Right ventricle myocardium inferior (tissue), 1 donor: ENCODE measurements at regions of chr2 and their contacts with region 1.

Region 1: DNA sequence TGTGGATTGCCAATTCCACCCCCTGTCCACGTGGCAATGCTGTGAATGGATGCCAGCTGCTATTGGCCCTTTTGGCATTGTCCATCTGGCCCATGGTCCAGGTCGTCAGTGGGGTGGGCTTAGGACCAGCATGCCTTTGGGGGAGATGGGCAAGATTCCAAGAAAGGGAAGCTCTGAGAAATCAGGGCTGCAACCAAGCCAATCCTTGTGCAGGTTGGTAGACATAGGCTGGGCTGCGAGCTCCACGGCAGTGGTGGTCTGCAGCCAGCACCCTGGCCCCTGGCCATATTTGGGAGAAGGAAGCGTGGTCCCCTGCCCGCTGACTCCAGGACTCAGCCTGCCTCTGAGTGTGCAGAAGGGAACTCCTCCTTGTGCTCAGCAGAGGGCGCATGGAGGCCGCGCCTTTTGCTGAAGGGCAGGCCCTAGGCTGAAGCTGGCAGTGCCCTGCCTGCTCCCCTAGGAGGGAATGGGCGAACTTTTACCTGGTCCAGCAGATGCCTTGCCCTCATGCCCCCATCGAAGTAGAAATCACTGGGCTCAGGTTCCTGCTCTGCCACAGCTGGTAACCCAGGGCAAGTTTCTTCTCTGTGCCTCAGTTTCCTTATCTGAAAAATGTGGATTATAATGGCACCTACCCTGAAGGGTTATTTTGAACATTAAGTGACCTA is 5.4 kb downstream of the SPR start:
- DNase-seq: peak; percentile 82
- ATAC-seq: peak; percentile 77

Region 2: GRCh38 chr2:72689579-72690195 is 203.0 kb before region 1 on chr2:
- intact Hi-C with region 1: no loop called
- DNase-seq: no peak
- ATAC-seq: peak; percentile 28

Region 3: DNA sequence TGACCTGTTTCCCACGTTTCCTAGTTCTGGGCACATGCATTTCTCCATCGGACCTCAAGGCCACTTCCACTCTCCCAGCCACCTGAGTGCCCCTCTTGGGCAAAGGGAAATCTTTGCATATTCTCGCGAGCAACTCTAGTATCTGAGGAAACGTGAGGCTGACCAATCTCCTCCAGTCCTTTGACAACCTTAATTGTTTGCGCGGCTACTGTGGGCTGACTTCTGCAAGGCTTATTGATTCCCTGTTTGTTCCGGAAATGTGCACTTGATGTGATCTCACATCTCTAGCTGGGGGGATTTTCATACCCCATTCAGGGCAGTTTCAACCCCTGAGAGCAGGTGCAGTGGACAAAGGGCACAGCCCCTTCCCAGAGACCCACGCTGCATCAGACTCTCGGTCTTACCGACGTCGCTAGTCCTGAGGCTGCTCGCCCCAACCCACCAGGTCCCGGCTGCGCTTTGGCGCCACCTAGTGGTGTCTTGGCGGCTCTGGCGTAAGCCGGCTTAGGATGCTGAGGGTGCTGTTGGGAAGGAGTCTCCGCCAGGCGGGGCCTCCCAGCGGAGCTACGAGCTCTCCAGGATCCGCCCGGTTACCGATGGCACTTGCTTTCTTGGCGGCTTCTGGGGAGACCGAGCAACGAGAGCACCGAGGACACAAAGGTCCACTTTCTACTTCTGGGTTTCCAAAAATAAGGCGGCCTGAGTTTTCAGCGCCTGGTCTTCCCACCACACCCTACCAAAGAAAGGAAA is 30.2 kb before region 1 on chr2:
- intact Hi-C with region 1: no loop called
- DNase-seq: peak; percentile 93
- ATAC-seq: peak; percentile 98

Region 4: GRCh38 chr2:72973566-72974435 is 81.2 kb after region 1 on chr2:
- intact Hi-C with region 1: loop called (anchors 2 kb)
- DNase-seq: peak; percentile 62
- ATAC-seq: peak; percentile 63

Region 5: DNA sequence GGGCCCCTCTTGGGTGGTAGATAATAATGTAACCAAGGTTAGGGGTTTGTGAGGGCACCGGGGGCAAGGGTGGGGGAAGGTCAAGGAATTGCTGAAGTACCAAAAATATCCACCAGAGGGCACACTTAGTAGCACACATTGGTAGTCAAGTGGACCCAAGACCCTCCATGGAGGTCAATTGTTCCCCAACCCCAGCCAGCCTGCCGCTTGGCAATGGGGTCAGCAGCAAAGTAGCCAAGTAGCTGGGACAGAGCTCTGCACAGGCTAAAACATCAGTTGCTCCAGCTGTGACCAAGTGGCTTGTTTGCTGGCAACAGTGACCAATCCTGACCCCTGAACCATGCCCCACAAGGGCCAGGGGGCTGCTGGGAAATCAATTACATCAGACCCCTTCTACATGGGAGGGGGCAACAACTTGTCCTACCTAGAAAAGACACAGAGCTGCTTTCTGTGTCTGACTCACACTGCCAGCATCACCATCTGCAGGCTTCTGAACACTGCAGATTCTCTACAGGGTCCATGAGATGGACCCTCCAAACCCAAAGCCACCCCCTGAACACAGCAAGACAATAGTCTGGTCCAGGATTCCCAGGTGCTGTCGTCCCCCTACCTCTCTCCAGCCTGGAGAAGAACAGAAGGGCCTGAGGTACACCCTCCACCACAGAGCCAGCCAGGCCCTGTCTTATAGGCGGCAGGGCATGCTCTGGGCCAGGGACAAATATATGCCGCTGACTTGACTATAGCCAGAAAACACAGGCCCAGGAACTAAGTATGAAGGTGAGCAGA is 100.7 kb after region 1 on chr2:
- intact Hi-C with region 1: loop called (anchors 5 kb)
- DNase-seq: no peak
- ATAC-seq: no peak

Region 6: GRCh38 chr2:73071360-73072133 is 178.9 kb after region 1 on chr2 and contains the start of gene SFXN5:
- intact Hi-C with region 1: loop called (anchors 1 kb)
- DNase-seq: peak; percentile 100
- ATAC-seq: peak; percentile 97
- total RNA-seq, gene SFXN5: 9.6 TPM

Region 7: DNA sequence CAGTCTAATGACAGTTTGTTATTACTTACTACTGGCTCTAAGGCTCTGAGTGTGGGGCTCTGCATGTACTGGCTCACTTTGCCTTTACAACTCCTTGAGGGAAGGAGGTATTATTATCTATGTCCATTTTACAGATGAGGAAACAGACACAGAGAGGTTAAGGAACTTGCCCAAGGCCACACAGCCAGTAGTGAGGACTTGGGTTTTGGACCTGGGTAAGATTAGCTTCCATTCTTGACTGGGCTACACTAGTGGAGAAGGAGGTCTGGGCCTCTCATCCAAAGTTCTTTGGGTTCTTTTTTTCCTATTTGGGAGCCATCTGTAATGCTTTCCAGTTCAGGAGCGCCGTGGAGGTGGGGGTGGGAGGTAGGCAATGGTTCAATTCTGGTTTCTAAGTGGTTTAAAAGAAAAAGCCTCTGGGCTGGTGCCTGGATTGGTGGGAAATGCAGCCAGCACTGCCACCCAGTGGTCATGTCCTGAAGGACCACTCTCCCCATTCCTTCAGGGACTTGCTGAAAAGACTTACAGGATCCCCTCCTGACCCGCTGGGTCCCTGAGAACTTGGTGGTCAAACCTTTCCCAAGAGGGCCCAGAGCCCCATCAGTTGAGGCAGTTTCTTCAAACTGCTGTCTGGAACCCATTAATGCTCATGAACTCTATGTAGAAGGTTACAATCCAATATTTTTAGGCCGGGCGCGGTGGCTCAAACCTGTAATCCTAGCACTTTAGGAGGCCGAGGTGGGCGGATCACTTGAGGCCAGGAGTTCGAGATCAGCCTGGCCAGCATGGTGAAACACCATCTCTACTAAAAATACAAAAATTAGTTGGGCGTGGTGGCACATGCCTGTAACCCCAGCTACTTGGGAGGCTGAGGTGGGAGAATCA is 271.1 kb after region 1 on chr2:
- intact Hi-C with region 1: loop called (anchors 1 kb)
- DNase-seq: peak; percentile 59
- ATAC-seq: peak; percentile 76

Region 8: GRCh38 chr2:73176881-73177644 is 284.4 kb after region 1 on chr2:
- intact Hi-C with region 1: loop called (anchors 5 kb)
- DNase-seq: peak; percentile 97
- ATAC-seq: peak; percentile 96